Activated CD4-positive, alpha-beta memory T cell treated with anti-CD3 and anti-CD28 coated beads for 36 hours (primary cell): ENCODE measurements at regions of chr19 and their contacts with region 1.

Region 1: DNA sequence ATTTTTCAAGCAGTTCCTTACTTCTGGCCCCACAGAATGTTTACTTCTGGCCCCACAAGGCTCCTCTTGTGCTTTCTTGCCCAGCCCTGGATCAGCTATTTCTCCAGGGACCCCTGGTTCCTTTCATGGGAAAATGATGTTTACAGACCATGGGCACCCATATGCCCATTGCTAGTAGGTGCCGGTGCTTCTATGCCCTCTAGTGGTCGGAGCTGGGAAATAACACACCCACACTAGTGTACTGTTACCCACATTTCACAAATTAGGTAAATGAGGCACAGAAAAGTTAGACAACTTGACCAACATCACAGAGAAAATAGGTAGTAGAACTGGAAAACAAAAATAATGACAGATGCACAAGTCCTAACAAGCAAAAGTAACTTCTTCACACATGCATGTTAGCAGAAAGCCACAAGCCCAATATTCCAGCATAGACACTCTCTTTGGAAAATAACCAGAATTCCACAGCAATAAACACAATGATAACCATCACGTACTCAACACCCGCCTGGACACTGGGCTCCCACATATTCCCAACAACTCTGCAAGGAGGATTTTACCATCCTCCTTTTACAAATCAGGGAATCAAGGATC is 1.3 kb upstream of the CEACAM6 start:
- DNase-seq: peak; percentile 78
- H3K4me3 Mint-ChIP-seq: no peak overlapping the region
- H3K27ac Mint-ChIP-seq: no peak overlapping the region
- H3K4me1 Mint-ChIP-seq: peaks cover 5% of the 10 kb centered on the region
- H3K27me3 Mint-ChIP-seq: peaks cover 31% of the 10 kb centered on the region

Region 2: DNA sequence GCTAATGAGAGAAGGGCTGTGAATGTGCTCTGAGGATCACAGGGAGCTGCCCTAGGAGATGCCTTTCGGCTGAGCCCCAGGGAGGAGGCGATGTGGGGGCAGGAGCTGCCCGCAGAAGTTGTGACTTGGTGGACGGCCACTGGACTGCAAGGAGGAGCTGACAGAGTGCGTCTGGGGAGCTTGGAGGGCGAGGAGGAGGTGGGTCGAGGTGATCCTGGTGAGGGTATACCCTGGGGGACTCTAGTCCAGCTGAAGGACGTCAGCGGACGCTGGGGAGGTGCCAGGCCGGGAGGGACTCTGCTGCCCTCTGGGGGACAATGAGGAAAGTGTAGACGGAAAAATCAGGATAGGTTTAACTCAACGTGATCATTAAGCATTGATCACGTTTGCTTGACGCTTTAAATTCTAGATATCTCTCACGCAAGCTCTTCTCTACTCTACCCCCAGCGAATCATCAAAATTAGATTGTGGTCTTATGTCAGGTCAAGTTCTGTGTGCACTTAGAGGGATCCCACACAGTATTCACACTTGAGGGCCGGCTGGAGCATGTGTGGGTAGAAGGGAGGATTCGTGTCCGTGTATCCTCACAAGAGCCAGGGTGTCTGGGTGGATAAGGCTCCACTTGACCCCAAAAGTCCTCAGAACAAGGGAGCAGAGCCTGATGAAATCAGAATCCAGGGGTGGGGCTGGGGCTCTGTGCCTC is 62.6 kb before region 1 on chr19:
- CTCF ChIA-PET with region 1: interaction called, 14 read pairs
- POLR2A ChIA-PET with region 1: no interaction called
- intact Hi-C with region 1: no loop called
- DNase-seq: peak; percentile 34
- H3K4me3 Mint-ChIP-seq: no peak overlapping the region
- H3K27ac Mint-ChIP-seq: no peak overlapping the region
- H3K4me1 Mint-ChIP-seq: no peaks in the 10 kb centered on the region
- H3K27me3 Mint-ChIP-seq: peaks cover 31% of the 10 kb centered on the region

Region 3: DNA sequence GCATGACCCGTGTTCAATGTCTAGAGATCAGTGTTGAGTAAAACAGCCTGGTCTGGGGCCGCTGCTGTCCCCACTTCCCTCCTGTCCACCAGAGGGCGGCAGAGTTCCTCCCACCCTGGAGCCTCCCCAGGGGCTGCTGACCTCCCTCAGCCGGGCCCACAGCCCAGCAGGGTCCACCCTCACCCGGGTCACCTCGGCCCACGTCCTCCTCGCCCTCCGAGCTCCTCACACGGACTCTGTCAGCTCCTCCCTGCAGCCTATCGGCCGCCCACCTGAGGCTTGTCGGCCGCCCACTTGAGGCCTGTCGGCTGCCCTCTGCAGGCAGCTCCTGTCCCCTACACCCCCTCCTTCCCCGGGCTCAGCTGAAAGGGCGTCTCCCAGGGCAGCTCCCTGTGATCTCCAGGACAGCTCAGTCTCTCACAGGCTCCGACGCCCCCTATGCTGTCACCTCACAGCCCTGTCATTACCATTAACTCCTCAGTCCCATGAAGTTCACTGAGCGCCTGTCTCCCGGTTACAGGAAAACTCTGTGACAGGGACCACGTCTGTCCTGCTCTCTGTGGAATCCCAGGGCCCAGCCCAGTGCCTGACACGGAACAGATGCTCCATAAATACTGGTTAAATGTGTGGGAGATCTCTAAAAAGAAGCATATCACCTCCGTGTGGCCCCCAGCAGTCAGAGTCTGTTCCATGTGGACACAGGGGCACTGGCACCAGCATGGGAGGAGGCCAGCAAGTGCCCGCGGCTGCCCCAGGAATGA is 47.1 kb before region 1 on chr19:
- CTCF ChIA-PET with region 1: interaction called, 54 read pairs
- POLR2A ChIA-PET with region 1: no interaction called
- intact Hi-C with region 1: no loop called
- DNase-seq: peak; percentile 76
- H3K4me3 Mint-ChIP-seq: peak overlapping the region; percentile 40
- H3K27ac Mint-ChIP-seq: no peak overlapping the region
- H3K4me1 Mint-ChIP-seq: peaks cover 3% of the 10 kb centered on the region
- H3K27me3 Mint-ChIP-seq: peaks cover 37% of the 10 kb centered on the region

Region 4: GRCh38 chr19:41740415-41741243 is 13.4 kb before region 1 on chr19:
- CTCF ChIA-PET with region 1: interaction called, 38 read pairs
- POLR2A ChIA-PET with region 1: no interaction called
- intact Hi-C with region 1: no loop called
- DNase-seq: peak; percentile 34
- H3K4me3 Mint-ChIP-seq: no peak overlapping the region
- H3K27ac Mint-ChIP-seq: peak overlapping the region; percentile 26
- H3K4me1 Mint-ChIP-seq: peaks cover 20% of the 10 kb centered on the region
- H3K27me3 Mint-ChIP-seq: peaks cover 38% of the 10 kb centered on the region

Region 5: GRCh38 chr19:41785653-41786052 is 31.6 kb after region 1 on chr19:
- CTCF ChIA-PET with region 1: interaction called, 158 read pairs
- POLR2A ChIA-PET with region 1: no interaction called
- intact Hi-C with region 1: loop called (anchors 1 kb)
- DNase-seq: peak; percentile 83
- H3K4me3 Mint-ChIP-seq: peak overlapping the region; percentile 0
- H3K27ac Mint-ChIP-seq: no peak overlapping the region
- H3K4me1 Mint-ChIP-seq: peaks cover 16% of the 10 kb centered on the region
- H3K27me3 Mint-ChIP-seq: peaks cover 47% of the 10 kb centered on the region

Region 6: DNA sequence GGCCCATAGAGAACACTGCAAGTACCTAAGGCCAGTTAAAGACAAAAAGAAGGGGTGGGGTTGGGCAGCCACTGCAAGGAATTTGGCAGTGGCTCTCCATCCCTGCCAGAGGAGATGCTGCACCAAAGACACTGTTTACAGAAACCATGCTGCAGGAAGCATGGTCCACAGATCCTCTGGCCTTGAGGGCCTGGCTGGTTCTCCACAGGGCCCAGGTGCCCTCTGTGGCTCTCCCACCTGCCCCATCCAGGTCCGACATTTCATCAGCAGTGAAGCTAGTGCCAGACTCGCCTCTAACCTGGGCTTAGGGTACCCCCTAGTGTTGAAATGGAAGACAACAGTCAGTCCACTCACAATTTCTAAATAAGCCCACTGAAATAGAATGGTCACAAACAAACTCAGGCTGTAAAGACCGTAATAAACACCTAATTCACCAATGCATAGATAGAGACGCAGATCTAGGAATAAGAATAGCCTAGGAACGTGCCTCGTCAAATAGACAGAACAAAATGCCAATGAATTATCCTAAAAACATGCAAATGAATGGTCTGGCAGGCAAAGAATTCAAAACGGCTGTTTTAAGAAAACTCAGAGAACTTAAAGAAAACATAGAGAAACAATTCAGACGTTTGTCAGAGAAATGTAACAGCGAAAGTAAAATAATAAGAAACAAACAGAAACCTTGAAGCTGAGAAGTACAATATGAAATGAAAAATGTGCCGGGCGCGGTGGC is 67.1 kb after region 1 on chr19:
- CTCF ChIA-PET with region 1: interaction called, 23 read pairs
- POLR2A ChIA-PET with region 1: interaction called, 3 read pairs
- intact Hi-C with region 1: loop called (anchors 2 kb)
- DNase-seq: peak; percentile 53
- H3K4me3 Mint-ChIP-seq: no peak overlapping the region
- H3K27ac Mint-ChIP-seq: no peak overlapping the region
- H3K4me1 Mint-ChIP-seq: no peaks in the 10 kb centered on the region
- H3K27me3 Mint-ChIP-seq: peaks cover 15% of the 10 kb centered on the region

Region 7: GRCh38 chr19:42010245-42011126 is 256.5 kb after region 1 on chr19:
- CTCF ChIA-PET with region 1: no interaction called
- POLR2A ChIA-PET with region 1: no interaction called
- intact Hi-C with region 1: no loop called
- DNase-seq: no peak
- H3K4me3 Mint-ChIP-seq: no peak overlapping the region
- H3K27ac Mint-ChIP-seq: no peak overlapping the region
- H3K4me1 Mint-ChIP-seq: no peaks in the 10 kb centered on the region
- H3K27me3 Mint-ChIP-seq: peaks cover 3% of the 10 kb centered on the region